ENCODE measurements at regions of chr6 and their contacts with region 1.

Region 1: DNA sequence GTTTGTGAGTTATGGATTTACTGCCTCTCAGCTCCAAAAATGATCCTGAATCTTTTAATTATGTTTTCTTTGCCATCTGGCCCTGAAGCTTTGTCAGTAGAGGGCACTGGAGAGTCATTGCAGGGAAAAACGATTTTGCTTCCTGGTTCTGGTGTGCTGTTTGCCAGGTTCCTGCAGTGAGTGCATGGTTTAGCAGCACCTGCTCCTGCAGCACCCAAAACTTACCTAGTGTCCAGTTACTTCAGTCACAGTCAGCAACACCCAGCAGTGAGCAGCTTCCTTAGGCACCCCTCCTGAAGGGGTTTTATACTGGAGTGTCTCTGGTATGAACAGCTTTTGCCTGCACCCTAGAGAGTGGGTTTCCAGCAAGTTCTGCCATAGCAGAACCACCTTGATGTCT is 6.0 kb upstream of the TRIM26 start:
- DNase-seq: peak; percentile 42 to 58
- ATAC-seq: peak; percentile 73 to 78; a peak in 5 of 6 replicates
- H3K4me3 ChIP-seq: no peak overlapping the region
- H3K27ac ChIP-seq: peak overlapping the region in 1 of 2 experiments; percentile 27; a peak in 1 of 6 replicates
- H3K4me1 ChIP-seq: peaks cover 4% of the 10 kb centered on the region; the same call in 1 of the 3 replicates
- CTCF ChIP-seq: peak; percentile 71
- EP300 ChIP-seq: no peak
- POLR2A ChIP-seq: no peak
- RAD21 ChIP-seq: peak; percentile 60 to 66

Region 2: GRCh38 chr6:29892696-29893095 is 326.5 kb before region 1 on chr6:
- CTCF ChIA-PET with region 1: no interaction called
- POLR2A ChIA-PET with region 1: no interaction called
- DNase-seq: no peak
- ATAC-seq: no peak
- H3K4me3 ChIP-seq: no peak overlapping the region
- H3K27ac ChIP-seq: no peak overlapping the region
- H3K4me1 ChIP-seq: no peaks in the 10 kb centered on the region
- CTCF ChIP-seq: no peak
- EP300 ChIP-seq: no peak
- POLR2A ChIP-seq: no peak
- RAD21 ChIP-seq: no peak

Region 3: GRCh38 chr6:30160785-30161531 is 58.3 kb before region 1 on chr6 and contains the start of gene TRIM10:
- CTCF ChIA-PET with region 1: no interaction called
- POLR2A ChIA-PET with region 1: no interaction called
- DNase-seq: no peak
- ATAC-seq: no peak
- H3K4me3 ChIP-seq: no peak within 1 kb of the TSS
- H3K27ac ChIP-seq: no peak within 1 kb of the TSS
- H3K4me1 ChIP-seq: peaks cover 13% of the 10 kb centered on the region
- CTCF ChIP-seq: no peak
- EP300 ChIP-seq: no peak
- POLR2A ChIP-seq: no peak
- RAD21 ChIP-seq: no peak
- polyA plus RNA-seq, gene TRIM10: 0.09 and 0.12 TPM in 2 replicates

Region 4: GRCh38 chr6:30207619-30208295 is 11.5 kb before region 1 on chr6:
- CTCF ChIA-PET with region 1: interaction called, 13 read pairs
- POLR2A ChIA-PET with region 1: interaction called, 3 read pairs
- DNase-seq: no peak
- ATAC-seq: peak in 1 of 2 experiments; percentile 47; a peak in 3 of 6 replicates
- H3K4me3 ChIP-seq: no peak overlapping the region
- H3K27ac ChIP-seq: peak overlapping the region; percentile 78
- H3K4me1 ChIP-seq: peaks cover 70% of the 10 kb centered on the region
- CTCF ChIP-seq: no peak
- EP300 ChIP-seq: no peak
- POLR2A ChIP-seq: no peak
- RAD21 ChIP-seq: no peak

Region 5: DNA sequence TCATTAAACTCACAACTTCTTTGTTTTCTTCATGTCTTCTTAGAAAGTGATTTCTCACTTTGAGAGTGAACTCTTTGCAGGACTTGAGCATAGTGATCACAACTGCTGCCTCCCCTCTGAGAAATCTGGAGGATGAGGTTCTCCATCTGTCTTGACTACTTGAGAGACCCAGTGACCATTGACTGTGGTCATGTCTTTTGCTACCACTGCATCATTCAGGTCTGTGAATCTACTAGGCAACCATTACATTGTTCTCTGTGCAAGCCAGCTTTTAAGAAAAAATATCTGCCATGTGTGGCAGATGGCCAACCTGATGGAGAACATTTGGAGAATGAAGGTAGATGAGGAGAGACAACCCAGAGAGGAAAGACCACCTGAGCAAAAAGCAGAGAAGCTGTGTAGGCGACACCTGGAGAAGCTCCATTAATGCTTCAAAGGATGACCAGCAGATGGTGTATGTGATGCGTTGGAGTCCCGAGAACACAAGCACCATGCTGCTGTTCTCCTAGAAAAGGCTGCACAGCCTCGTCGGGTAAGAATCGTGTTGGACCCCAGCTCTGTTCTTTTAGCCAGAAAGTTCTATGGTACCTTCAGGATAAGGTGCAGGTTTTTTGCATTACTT is 19.0 kb after region 1 on chr6:
- CTCF ChIA-PET with region 1: interaction called, 18 read pairs
- POLR2A ChIA-PET with region 1: interaction called, 4 read pairs
- DNase-seq: peak; percentile 31 to 50
- ATAC-seq: peak; percentile 91 to 93
- H3K4me3 ChIP-seq: no peak overlapping the region
- H3K27ac ChIP-seq: no peak overlapping the region
- H3K4me1 ChIP-seq: no peaks in the 10 kb centered on the region
- CTCF ChIP-seq: peak; percentile 52
- EP300 ChIP-seq: no peak
- POLR2A ChIP-seq: no peak
- RAD21 ChIP-seq: peak; percentile 44 to 65; a peak in 4 of 5 replicates

Region 6: GRCh38 chr6:30396833-30397479 is 177.7 kb after region 1 on chr6:
- CTCF ChIA-PET with region 1: interaction called, 10 read pairs
- POLR2A ChIA-PET with region 1: no interaction called
- DNase-seq: peak; percentile 57 to 80
- ATAC-seq: peak; percentile 96 to 100
- H3K4me3 ChIP-seq: no peak overlapping the region
- H3K27ac ChIP-seq: no peak overlapping the region
- H3K4me1 ChIP-seq: no peaks in the 10 kb centered on the region
- CTCF ChIP-seq: peak; percentile 59
- EP300 ChIP-seq: no peak
- POLR2A ChIP-seq: no peak
- RAD21 ChIP-seq: peak; percentile 66 to 71

Region 7: DNA sequence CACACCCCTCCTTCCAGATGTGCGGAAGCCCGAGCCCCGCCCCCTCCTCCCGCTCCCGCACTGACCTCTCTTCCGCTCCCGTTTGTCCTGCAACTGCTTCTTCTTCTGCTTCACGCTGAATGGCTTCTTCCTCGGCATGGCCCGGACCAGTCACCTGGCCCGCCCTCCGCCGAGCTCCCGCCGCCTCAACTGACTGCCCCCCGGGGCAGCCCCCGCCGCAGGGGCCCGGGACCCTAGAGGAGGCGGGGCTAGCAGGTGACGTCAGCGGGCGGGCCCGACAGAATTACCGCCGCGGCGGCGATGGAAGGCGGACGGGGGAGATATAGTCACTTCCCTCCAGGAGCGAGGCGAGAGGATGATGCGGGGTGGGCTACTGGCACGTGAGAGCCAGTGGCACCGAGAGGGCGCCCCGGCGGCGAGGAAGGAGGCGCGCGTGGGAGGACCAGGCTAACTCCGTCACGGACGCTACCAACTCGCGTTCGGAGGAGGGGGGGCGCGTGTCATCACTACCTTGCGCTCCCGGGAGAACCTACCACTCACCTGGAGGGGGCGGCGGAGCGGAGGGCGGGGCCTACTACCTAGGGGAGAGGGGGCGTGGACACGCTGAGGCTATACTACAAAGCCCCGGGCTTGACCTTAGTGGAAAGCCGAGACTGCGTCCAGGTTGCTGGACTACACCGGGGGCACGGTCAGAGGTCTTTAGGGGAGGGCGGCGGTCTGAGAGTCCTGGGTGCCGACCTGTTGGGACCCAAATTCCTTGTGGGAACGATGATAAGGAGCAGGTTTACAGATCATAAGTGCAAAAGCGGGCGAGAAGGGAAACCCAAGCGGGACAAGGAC is 337.0 kb after region 1 on chr6 and contains the start of gene GNL1:
- CTCF ChIA-PET with region 1: no interaction called
- POLR2A ChIA-PET with region 1: no interaction called
- DNase-seq: peak; percentile 80 to 95
- ATAC-seq: peak; percentile 82 to 91
- H3K4me3 ChIP-seq: peak within 1 kb of the TSS; percentile 88
- H3K27ac ChIP-seq: peak within 1 kb of the TSS; percentile 91 to 94
- H3K4me1 ChIP-seq: peaks cover 13% of the 10 kb centered on the region; the same call in 2 of the 3 replicates
- CTCF ChIP-seq: no peak
- EP300 ChIP-seq: no peak
- POLR2A ChIP-seq: no peak
- RAD21 ChIP-seq: no peak
- polyA plus RNA-seq, gene GNL1: 18.5 and 25.6 TPM in 2 replicates